HEK293 (cell line): ENCODE measurements at regions of chr5 and their contacts with region 1.

Region 1: GRCh38 chr5:150560401-150561193 is 52.7 kb downstream of the NDST1 start:
- H3K4me3 ChIP-seq: no peak overlapping the region
- H3K27ac ChIP-seq: no peak overlapping the region
- H3K4me1 ChIP-seq: no peaks in the 10 kb centered on the region
- CTCF ChIP-seq: peak; percentile 46

Region 2: GRCh38 chr5:150544611-150545219 is 15.9 kb before region 1 on chr5:
- CTCF ChIA-PET with region 1: interaction called, 20 read pairs
- POLR2A ChIA-PET with region 1: no interaction called
- H3K4me3 ChIP-seq: no peak overlapping the region
- H3K27ac ChIP-seq: no peak overlapping the region
- H3K4me1 ChIP-seq: no peaks in the 10 kb centered on the region
- CTCF ChIP-seq: peak; percentile 94

Region 3: DNA sequence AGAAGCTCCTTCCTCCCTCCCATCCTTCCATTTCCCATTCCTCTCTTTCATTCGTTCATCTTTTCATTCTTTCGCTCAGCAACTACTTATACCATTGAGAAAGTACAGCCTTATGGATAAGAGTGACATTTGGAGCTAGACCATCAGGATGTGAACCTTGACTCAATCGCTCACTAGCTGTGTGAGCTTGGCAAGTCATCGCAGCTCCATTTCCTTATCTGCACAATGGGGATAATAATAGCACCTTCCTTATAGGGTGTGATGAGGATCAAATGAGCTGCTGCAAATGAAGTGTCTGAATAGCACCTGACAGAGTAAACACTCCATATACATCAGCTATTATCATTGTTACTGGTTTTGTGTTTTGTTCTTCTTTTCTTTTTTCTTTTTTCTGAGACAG is 51.8 kb after region 1 on chr5:
- CTCF ChIA-PET with region 1: interaction called, 10 read pairs
- POLR2A ChIA-PET with region 1: no interaction called
- H3K4me3 ChIP-seq: no peak overlapping the region
- H3K27ac ChIP-seq: no peak overlapping the region
- H3K4me1 ChIP-seq: peaks cover 21% of the 10 kb centered on the region
- CTCF ChIP-seq: no peak

Region 4: GRCh38 chr5:150656191-150657132 is 95.9 kb after region 1 on chr5:
- CTCF ChIA-PET with region 1: interaction called, 161 read pairs
- POLR2A ChIA-PET with region 1: interaction called, 4 read pairs
- H3K4me3 ChIP-seq: peak overlapping the region; percentile 55
- H3K27ac ChIP-seq: peak overlapping the region; percentile 73; the same call in 1 of the 2 replicates
- H3K4me1 ChIP-seq: no peaks in the 10 kb centered on the region
- CTCF ChIP-seq: peak; percentile 72

Region 5: DNA sequence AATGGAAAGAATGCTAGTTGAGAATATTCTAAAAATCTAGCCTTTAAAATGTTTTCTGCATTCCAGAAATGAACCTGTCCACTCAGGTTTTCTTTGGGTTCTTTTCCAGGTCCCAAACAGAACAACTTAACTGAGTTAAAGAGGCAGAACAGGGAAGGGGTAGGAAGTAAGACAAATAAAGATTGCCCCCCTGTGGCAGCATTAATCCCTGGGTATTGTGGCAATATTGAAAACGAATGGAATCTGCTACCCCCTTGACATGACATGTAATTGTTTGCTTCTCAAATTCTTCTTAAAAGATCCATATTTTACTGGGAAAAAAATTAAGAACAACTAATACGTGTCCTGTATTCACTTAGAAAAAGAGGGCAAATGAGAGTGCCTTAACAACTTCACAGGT is 149.6 kb after region 1 on chr5:
- CTCF ChIA-PET with region 1: interaction called, 18 read pairs
- POLR2A ChIA-PET with region 1: no interaction called
- H3K4me3 ChIP-seq: no peak overlapping the region
- H3K27ac ChIP-seq: no peak overlapping the region
- H3K4me1 ChIP-seq: peaks cover 4% of the 10 kb centered on the region; the same call in 1 of the 2 replicates
- CTCF ChIP-seq: 0 out of 2 replicates have a peak, but pooled peaks have one; percentile 23

Region 6: GRCh38 chr5:150801117-150801927 is 240.7 kb after region 1 on chr5:
- CTCF ChIA-PET with region 1: interaction called, 15 read pairs
- POLR2A ChIA-PET with region 1: no interaction called
- H3K4me3 ChIP-seq: peak overlapping the region; percentile 27
- H3K27ac ChIP-seq: no peak overlapping the region
- H3K4me1 ChIP-seq: no peaks in the 10 kb centered on the region
- CTCF ChIP-seq: no peak; the same call in 1 of the 2 replicates

Region 7: DNA sequence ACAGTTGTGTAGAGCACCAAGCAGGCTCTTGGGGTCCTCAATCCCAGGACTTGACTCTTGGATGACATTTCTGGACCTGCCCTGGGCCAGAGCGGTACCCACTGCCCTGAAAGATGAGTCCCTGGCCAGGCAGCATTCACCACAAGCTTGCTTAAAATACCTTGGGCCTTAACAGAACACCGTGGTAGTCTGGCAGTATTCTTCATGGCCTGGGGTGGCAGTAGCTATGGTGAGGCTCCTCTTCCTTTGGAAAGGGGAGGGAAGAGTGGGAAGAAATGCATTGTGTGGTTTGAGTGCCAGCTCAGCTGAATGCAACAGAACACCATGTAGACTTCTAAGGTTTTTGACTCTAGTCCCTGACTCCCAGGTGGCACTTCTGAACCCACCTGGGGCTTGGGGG is 256.3 kb after region 1 on chr5:
- CTCF ChIA-PET with region 1: no interaction called
- POLR2A ChIA-PET with region 1: no interaction called
- H3K4me3 ChIP-seq: no peak overlapping the region
- H3K27ac ChIP-seq: no peak overlapping the region
- H3K4me1 ChIP-seq: no peaks in the 10 kb centered on the region
- CTCF ChIP-seq: no peak